Activated CD4-positive, alpha-beta memory T cell treated with anti-CD3 and anti-CD28 coated beads for 36 hours (primary cell): ENCODE measurements at regions of chr15 and their contacts with region 1.

Region 1: GRCh38 chr15:31128919-31129768 is 27.6 kb upstream of the TRPM1 start:
- DNase-seq: peak; percentile 81
- H3K4me3 Mint-ChIP-seq: no peak overlapping the region
- H3K27ac Mint-ChIP-seq: no peak overlapping the region
- H3K4me1 Mint-ChIP-seq: no peaks in the 10 kb centered on the region
- H3K27me3 Mint-ChIP-seq: no peaks in the 10 kb centered on the region

Region 2: GRCh38 chr15:31111091-31111647 is 18.0 kb before region 1 on chr15:
- CTCF ChIA-PET with region 1: interaction called, 17 read pairs
- POLR2A ChIA-PET with region 1: no interaction called
- intact Hi-C with region 1: no loop called
- DNase-seq: no peak
- H3K4me3 Mint-ChIP-seq: no peak overlapping the region
- H3K27ac Mint-ChIP-seq: no peak overlapping the region
- H3K4me1 Mint-ChIP-seq: no peaks in the 10 kb centered on the region
- H3K27me3 Mint-ChIP-seq: peaks cover 18% of the 10 kb centered on the region

Region 3: DNA sequence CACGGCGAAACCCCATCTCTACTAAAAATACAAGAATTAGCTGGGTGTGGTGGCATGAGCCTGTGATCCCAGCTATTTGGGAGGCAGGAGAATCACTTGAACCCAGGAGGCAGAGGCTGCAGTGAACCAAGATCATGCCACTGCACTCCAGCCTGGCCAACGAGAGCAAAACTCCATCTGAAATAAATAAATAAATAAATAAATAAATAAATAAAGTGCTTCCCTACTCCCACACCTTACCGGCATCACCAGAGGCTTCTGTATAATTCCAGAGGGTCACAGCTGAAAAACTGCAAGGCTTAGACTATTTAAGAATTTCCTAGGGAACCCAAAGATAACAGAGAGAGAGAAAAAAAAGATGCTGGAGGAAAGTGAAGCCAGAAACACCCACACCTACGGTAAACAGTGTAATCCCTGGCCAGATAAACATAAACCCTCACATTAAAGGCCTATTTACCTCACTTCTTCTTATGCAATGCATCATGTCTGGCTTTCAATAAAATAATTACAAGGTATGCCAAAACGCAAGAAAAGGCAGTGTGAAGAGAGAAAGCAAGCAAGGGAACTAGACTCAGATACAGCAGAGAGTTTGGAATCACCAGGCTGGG is 12.6 kb before region 1 on chr15:
- CTCF ChIA-PET with region 1: interaction called, 17 read pairs
- POLR2A ChIA-PET with region 1: no interaction called
- intact Hi-C with region 1: no loop called
- DNase-seq: no peak
- H3K4me3 Mint-ChIP-seq: no peak overlapping the region
- H3K27ac Mint-ChIP-seq: no peak overlapping the region
- H3K4me1 Mint-ChIP-seq: no peaks in the 10 kb centered on the region
- H3K27me3 Mint-ChIP-seq: peaks cover 26% of the 10 kb centered on the region

Region 4: DNA sequence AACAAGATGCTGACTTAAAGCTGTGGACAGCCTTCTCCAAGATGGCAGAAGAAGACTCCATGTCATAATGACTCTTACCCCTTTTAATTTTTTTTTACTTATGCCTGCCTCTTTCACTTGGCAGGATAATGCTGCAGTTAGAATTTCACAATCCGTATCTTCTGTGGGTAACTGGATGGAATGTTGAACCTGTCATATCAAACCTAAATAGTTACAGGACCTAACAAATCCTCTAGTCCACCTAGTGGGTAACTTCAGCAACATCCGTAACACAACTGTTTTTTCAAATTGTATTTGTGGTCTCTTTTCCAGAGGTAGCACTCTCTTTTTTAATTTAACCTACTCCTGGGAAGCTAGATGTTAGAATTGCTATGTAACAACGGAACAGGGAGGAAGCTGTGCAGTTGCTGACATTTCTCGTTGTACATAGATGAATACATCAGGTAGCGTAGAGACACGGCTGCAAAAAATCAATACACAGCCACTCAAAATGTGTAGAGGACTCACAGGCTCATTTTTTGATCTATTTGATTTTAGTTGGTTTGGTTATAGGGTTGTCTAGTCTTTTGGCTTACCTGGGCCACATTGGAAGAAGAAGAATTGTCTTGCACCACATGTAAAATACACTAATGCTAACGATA is 16.2 kb after region 1 on chr15:
- CTCF ChIA-PET with region 1: interaction called, 18 read pairs
- POLR2A ChIA-PET with region 1: no interaction called
- intact Hi-C with region 1: no loop called
- DNase-seq: no peak
- H3K4me3 Mint-ChIP-seq: no peak overlapping the region
- H3K27ac Mint-ChIP-seq: no peak overlapping the region
- H3K4me1 Mint-ChIP-seq: no peaks in the 10 kb centered on the region
- H3K27me3 Mint-ChIP-seq: no peaks in the 10 kb centered on the region